Activated CD8-positive, alpha-beta T cell treated with anti-CD3 and anti-CD28 coated beads for 36 hours (primary cell): ENCODE measurements at regions of chr1 and their contacts with region 1.

Region 1: DNA sequence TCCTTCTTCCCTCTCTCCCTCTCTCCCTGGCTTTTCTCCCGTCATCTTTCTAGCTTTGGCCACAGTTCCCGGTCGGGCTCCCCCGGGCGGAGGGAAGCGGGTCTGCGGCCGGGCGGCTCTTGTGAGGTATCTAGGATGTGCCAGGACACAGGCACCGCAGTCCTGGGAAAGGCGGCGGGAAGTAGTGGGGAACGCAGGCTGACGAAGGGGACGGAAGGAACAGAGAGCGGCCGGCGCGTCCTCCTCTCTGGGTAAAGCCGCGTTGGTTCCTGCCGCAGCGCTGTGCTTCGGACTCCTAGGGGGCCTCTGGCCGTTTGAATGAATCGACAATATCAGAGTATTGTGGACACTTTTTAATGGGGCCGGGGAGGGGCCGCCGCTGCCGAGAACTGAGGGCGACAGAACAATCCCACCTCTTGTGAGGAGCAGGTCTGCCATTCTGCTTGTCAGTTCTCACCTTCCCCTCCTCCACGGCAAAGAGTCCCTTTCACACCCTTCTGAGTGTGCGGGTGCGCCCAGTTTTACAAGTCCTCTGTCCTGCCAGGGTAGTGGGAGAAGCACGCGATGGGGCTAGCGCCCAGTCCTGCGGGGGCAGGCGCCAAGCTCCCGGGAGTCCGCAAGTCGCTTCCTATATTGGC is 1.2 kb upstream of the LHX9 start:
- DNase-seq: no peak
- ATAC-seq: no peak
- H3K4me3 Mint-ChIP-seq: peak overlapping the region; percentile 44
- H3K27ac Mint-ChIP-seq: no peak overlapping the region
- H3K4me1 Mint-ChIP-seq: peaks cover 74% of the 10 kb centered on the region
- H3K27me3 Mint-ChIP-seq: peaks cover 94% of the 10 kb centered on the region
- CTCF ChIP-seq: no peak

Region 2: DNA sequence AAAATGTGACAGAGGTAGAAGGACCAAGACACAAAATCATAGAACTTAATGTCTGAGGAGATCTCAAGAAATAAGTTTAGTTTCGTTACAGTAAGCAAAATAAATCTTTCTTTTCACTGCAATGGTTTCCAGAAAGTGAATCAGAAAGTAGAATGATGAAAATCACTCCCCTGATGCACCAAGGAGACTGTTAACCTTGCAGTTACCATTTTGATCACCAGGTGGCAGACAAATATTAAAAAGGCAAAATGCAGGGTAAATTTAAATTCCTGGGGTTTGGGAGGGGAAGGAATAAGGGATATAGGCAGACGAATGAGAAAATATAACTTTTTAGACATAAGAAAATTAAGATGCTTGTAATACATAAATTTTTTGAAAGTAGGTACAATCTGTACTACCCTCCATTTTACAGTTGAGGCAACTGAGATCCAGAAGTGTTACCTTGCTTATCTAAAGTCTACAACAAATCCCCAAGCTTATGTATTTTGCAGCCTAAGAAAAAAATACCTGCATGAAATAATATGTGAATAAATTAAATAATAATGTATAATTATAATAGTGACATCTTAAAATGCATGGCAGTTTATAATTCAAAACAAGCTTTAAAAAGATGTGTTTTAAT is 394.8 kb before region 1 on chr1:
- CTCF ChIA-PET with region 1: interaction called, 6 read pairs
- POLR2A ChIA-PET with region 1: no interaction called
- intact Hi-C with region 1: loop called (anchors 5 kb)
- DNase-seq: peak; percentile 26
- ATAC-seq: peak; percentile 79
- H3K4me3 Mint-ChIP-seq: no peak overlapping the region
- H3K27ac Mint-ChIP-seq: no peak overlapping the region
- H3K4me1 Mint-ChIP-seq: peaks cover 6% of the 10 kb centered on the region
- H3K27me3 Mint-ChIP-seq: no peaks in the 10 kb centered on the region
- CTCF ChIP-seq: peak; percentile 81

Region 3: DNA sequence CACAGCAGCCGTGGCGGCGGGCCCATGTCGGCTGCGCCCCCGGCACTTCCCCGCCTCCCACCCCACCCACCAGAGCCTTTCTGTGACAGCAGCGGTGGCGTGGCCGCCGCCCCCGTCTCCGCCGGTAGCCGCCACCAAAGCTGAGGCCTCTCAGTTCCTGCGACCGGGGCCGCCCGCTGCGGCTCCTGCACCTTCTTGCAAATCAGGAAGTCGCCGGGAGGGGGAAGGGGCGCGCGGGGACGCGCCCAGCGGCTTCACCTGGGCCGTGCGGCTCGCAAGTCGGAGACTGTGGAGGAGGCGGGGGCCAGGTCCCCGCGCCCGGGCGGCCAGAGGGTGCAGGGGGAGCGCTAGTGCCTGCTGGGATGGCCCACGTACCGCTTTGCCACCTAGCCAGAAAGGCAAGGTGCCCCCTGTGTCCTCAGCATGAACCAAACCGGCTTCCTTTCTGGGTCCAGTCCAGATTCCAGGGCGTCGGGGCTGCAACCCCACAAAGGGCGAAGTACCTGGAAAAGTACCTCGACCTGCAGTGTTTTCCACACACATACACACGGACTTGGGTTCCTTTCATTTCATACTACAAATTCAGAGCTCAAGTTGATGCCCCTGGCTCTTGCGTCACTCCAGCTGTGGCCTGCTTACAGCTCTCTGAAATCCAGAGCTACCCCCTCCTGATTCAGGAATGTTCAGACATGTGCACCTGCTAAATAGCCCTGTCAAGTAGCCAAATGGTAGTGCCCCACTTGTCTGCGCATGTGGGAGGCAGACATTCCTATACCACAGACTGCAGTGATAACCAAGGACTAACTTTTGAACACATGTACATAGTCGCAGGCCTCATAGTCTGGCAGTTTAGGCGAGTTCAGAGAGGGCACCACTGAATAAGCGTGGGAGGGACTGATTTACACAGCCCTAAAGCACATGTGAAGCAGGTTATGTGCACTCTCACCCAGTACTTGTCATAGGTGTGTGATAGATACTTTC is 140.4 kb before region 1 on chr1 and contains the start of gene DENND1B:
- CTCF ChIA-PET with region 1: no interaction called
- POLR2A ChIA-PET with region 1: interaction called, 3 read pairs
- intact Hi-C with region 1: loop called (anchors 10 kb)
- DNase-seq: peak; percentile 90
- ATAC-seq: peak; percentile 72
- H3K4me3 Mint-ChIP-seq: peak within 1 kb of the TSS; percentile 94
- H3K27ac Mint-ChIP-seq: peak within 1 kb of the TSS; percentile 99
- H3K4me1 Mint-ChIP-seq: peaks cover 65% of the 10 kb centered on the region
- H3K27me3 Mint-ChIP-seq: no peaks in the 10 kb centered on the region
- CTCF ChIP-seq: no peak
- total RNA-seq, gene DENND1B: 10.8 to 12.7 TPM

Region 4: DNA sequence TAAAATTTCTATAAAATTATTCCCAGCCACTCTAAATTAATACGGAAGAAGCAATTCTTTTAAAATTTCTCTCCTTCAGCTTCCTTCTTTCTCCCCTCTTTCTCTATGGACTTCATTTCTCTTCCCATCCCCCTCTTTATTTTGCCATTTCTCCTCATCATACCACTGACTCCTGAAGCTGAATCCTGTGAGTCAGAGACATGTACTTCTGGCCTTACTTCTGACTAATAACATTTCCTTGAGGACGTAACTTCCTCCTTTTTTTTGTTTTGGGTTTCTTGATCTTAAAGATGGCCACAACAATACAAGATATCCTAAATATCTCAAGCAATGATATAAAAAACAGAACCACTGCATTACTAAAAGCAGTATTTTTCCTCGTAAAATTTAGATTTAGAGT is 77.1 kb before region 1 on chr1:
- CTCF ChIA-PET with region 1: no interaction called
- POLR2A ChIA-PET with region 1: no interaction called
- intact Hi-C with region 1: no loop called
- DNase-seq: no peak
- ATAC-seq: no peak
- H3K4me3 Mint-ChIP-seq: no peak overlapping the region
- H3K27ac Mint-ChIP-seq: no peak overlapping the region
- H3K4me1 Mint-ChIP-seq: peaks cover 2% of the 10 kb centered on the region
- H3K27me3 Mint-ChIP-seq: no peaks in the 10 kb centered on the region
- CTCF ChIP-seq: no peak

Region 5: DNA sequence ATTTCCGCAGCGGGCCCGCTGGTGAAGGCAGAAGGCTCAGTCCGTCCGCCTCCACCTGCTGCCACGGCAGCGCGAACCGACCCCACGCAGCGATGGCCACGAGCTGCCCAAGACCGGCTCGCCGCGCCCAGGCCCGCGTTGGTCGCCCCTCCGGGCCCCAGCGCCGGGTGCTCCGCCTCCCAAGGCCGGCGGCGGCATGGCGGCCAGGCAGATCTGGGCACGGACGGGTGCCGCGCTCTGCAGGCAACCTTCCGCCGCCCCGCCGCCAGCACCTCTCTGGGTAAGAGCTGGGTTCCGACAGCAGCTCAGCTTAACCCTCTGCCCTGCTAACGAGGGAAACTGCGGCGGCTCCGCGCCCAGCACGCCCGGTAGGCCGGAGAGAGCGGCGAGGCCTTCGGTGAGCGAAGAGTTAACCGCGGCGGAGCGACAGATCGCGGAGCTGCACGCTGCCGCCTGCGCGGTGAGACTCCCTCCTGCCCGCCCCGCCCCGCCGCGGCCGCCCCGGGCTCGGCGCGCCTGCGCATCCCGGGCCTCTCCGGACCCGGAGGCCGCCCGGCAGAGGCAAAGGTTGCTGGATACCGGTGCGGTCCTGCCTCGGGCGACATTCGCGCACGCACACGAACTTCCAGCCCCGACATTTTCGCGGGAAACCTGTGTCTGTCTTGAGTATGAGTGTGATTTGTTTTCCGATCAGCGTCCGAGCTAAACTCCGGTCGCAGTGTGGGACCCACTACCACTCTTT is 13.4 kb before region 1 on chr1 and contains the start of gene C1orf53:
- CTCF ChIA-PET with region 1: interaction called, 5 read pairs
- POLR2A ChIA-PET with region 1: interaction called, 11 read pairs
- intact Hi-C with region 1: no loop called
- DNase-seq: peak; percentile 77
- ATAC-seq: peak; percentile 95
- H3K4me3 Mint-ChIP-seq: peak within 1 kb of the TSS; percentile 71
- H3K27ac Mint-ChIP-seq: peak within 1 kb of the TSS; percentile 88
- H3K4me1 Mint-ChIP-seq: peaks cover 15% of the 10 kb centered on the region
- H3K27me3 Mint-ChIP-seq: peaks cover 48% of the 10 kb centered on the region
- CTCF ChIP-seq: no peak
- total RNA-seq, gene C1orf53: 0.96 to 1.2 TPM

Region 6: GRCh38 chr1:197967063-197967462 is 51.1 kb after region 1 on chr1:
- CTCF ChIA-PET with region 1: no interaction called
- POLR2A ChIA-PET with region 1: no interaction called
- intact Hi-C with region 1: no loop called
- DNase-seq: no peak
- ATAC-seq: no peak
- H3K4me3 Mint-ChIP-seq: no peak overlapping the region
- H3K27ac Mint-ChIP-seq: no peak overlapping the region
- H3K4me1 Mint-ChIP-seq: no peaks in the 10 kb centered on the region
- H3K27me3 Mint-ChIP-seq: peaks cover 2% of the 10 kb centered on the region
- CTCF ChIP-seq: no peak

Region 7: GRCh38 chr1:198465201-198466144 is 549.5 kb after region 1 on chr1:
- CTCF ChIA-PET with region 1: no interaction called
- POLR2A ChIA-PET with region 1: no interaction called
- intact Hi-C with region 1: loop called (anchors 10 kb)
- DNase-seq: no peak
- ATAC-seq: peak; percentile 76
- H3K4me3 Mint-ChIP-seq: no peak overlapping the region
- H3K27ac Mint-ChIP-seq: no peak overlapping the region
- H3K4me1 Mint-ChIP-seq: peaks cover 19% of the 10 kb centered on the region
- H3K27me3 Mint-ChIP-seq: no peaks in the 10 kb centered on the region
- CTCF ChIP-seq: peak; percentile 77